Esophagus muscularis mucosa (tissue), 4 donors: ENCODE measurements at regions of chr10 and their contacts with region 1.

Region 1: DNA sequence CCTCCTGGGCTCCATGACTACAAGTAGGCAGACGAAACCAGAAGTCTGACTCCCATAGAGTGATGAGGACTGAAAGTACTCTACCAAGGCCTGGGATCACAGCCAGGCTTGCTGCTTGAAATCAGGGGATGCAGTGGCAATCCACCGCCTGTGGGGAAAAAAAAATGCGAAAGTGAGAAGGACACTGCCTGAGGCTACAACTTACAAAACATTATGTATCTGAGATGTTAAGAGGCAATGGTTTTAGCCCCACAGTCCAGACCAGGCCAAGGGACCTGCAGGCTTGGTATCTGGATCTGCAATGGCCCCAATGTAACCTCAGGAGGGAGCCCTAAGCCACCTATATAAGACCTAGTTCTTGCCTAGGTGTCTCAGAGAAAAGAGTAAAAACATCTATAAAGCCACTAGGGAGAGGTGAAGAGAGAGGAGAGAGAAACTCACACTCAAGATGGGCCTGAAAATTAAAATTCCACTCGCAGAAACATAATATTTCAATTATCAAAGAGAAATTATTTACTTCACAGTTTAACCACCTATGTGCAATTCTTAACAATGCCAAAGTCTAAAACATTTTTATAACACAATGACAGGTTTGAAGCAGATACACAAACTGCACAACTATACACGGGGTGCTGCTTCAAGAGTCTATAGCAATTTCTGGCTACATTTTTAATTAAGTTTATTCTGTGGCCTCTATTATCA is 13.9 kb downstream of the DNAJC1 start:
- DNase-seq: no peak
- H3K4me3 ChIP-seq: no peak overlapping the region
- H3K27ac ChIP-seq: peak overlapping the region in 3 of 4 donors; percentile 3 to 52 (median 8)
- H3K4me1 ChIP-seq: peaks cover 0 to 12% (median 12%) of the 10 kb centered on the region in 4 donors
- H3K27me3 ChIP-seq: no peaks in the 10 kb centered on the region
- CTCF ChIP-seq: peak; percentile 34 to 56 (median 52)
- EP300 ChIP-seq: no peak
- POLR2A ChIP-seq: no peak

Region 2: DNA sequence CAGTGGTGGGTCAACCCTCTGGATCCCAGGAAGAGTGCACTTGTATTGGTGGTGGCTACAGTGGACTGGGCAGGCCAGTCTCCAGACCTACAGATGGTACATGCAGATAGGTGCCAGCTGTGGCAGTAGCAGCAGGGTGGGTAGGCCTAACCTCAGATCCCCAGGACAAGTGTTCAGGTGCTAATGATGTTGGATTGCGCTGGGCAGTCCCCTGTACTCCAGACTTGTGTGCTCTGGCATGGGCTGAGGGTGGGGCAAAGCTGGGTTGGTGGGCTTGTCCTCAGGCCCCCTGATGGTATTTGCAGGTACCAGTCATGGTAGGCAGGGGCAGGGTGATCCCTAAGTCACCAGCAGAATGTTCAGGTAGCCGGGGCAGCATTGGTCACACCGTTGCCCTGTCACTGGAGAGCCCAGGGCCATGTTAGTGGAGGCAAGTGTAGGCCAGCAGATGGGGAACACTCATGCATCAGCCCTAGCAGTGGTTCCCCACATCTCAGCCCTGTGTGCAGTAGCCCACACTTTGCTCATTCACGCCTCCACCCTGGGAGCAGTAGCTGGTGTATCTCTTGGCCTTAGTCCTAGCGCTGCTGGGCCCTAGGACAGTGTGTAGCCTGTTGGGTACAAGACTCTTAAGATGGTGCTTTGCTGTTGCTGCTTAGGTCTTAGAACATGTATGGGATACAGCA is 284.3 kb before region 1 on chr10:
- intact Hi-C with region 1: no loop called
- DNase-seq: no peak
- H3K4me3 ChIP-seq: no peak overlapping the region
- H3K27ac ChIP-seq: no peak overlapping the region
- H3K4me1 ChIP-seq: peaks cover 0 to 4% (median 0%) of the 10 kb centered on the region in 4 donors
- H3K27me3 ChIP-seq: no peaks in the 10 kb centered on the region
- CTCF ChIP-seq: no peak
- EP300 ChIP-seq: no peak
- POLR2A ChIP-seq: no peak

Region 3: GRCh38 chr10:23067939-23068775 is 1078.6 kb after region 1 on chr10:
- intact Hi-C with region 1: loop called (anchors 5 kb)
- DNase-seq: no peak
- H3K4me3 ChIP-seq: no peak overlapping the region
- H3K27ac ChIP-seq: no peak overlapping the region
- H3K4me1 ChIP-seq: peaks cover 12 to 34% (median 19%) of the 10 kb centered on the region in 4 donors
- H3K27me3 ChIP-seq: no peaks in the 10 kb centered on the region
- CTCF ChIP-seq: peak; percentile 69 to 83 (median 72)
- EP300 ChIP-seq: no peak
- POLR2A ChIP-seq: no peak